Common myeloid progenitor, CD34-positive (primary cell): ENCODE measurements at regions of chr2 and their contacts with region 1.

Region 1: DNA sequence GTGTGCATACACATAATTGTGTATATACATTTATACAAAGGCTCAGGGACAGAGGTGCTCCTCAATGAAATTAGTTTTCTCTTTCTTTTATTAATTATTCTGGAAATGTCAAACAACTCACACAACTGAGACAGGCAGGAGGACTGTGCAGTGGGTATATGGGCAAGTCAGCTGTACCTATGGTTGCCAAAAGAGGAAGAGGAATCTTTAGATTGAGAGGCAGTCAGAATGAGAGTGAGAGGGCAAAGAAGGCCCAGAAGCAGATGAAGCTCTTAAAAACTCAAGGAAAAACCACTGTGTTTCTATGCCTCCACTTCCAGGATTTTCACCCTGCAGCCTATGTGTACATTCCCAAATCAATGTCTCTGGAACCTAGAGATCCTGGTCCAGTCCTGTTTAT is 79.1 kb downstream of the CACNB4 start:
- DNase-seq: no peak
- H3K4me3 ChIP-seq: no peak overlapping the region
- H3K27ac ChIP-seq: no peak overlapping the region
- H3K4me1 ChIP-seq: no peaks in the 10 kb centered on the region
- H3K27me3 ChIP-seq: no peaks in the 10 kb centered on the region

Region 2: DNA sequence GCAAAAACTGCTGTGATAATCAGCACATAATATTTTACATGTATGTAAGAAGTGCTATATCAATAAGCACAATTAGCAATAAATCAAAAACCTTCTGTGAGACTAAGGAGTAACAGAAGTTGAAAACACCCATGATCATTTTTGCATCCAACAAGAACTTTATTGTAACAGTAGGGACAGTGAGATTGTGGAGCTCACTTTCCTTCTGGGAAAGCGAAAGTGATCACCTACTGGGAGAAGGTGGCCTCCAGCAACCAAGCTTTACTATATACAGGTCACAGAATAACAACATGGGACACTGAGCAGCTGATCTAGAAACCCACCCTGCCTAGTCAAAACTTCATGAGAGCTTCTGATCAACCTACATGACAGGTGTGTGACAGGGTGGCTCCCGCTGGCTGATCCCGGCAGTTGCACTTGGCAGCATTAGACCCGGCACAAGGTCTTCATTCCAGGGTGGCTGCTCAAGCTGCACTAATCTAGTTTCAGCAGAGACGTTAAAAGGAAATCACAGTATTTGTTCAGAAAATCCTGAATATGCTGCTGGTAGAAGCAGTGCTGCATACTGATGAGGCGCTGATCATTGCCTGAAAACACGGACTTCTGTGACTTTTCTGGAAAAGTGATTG is 128.1 kb before region 1 on chr2:
- CTCF ChIA-PET with region 1: no interaction called
- POLR2A ChIA-PET with region 1: no interaction called
- DNase-seq: no peak
- H3K4me3 ChIP-seq: no peak overlapping the region
- H3K27ac ChIP-seq: no peak overlapping the region
- H3K4me1 ChIP-seq: no peaks in the 10 kb centered on the region
- H3K27me3 ChIP-seq: no peaks in the 10 kb centered on the region

Region 3: DNA sequence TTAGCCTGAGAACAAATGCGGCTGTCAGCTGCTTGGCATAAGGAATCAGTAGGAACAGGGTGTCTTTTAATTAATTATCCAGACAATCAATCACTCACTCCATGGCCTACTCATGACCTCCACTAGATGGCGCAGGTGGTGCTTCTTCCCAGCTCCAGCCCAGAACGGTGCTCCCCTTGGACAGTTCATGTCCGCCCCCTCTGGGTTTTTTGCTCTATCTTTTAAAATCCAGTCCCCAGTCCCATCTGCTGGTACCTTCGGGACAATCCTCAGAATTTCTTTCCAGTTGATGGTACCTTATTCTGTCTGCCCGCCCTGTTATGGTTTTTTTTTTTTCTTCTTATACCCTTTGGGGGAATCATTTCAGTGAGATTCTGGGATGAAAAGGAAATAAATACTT is 20.7 kb before region 1 on chr2:
- CTCF ChIA-PET with region 1: interaction called, 19 read pairs
- POLR2A ChIA-PET with region 1: no interaction called
- DNase-seq: peak; percentile 49 to 60 (median 55)
- H3K4me3 ChIP-seq: no peak overlapping the region
- H3K27ac ChIP-seq: no peak overlapping the region
- H3K4me1 ChIP-seq: peaks cover 0 to 16% (median 3%) of the 10 kb centered on the region in 4 experiments
- H3K27me3 ChIP-seq: no peaks in the 10 kb centered on the region

Region 4: GRCh38 chr2:152497481-152498052 is 477.8 kb after region 1 on chr2:
- CTCF ChIA-PET with region 1: no interaction called
- POLR2A ChIA-PET with region 1: no interaction called
- DNase-seq: no peak
- H3K4me3 ChIP-seq: no peak overlapping the region
- H3K27ac ChIP-seq: no peak overlapping the region
- H3K4me1 ChIP-seq: peaks cover 0 to 2% (median 0%) of the 10 kb centered on the region in 4 experiments
- H3K27me3 ChIP-seq: no peaks in the 10 kb centered on the region